ENCODE measurements at regions of chr15 and their contacts with region 1.

Region 1: GRCh38 chr15:71272932-71273331 is 157.7 kb downstream of the THSD4 start:
- DNase-seq: no peak
- H3K4me3 ChIP-seq: no peak overlapping the region
- H3K4me1 ChIP-seq: no peaks in the 10 kb centered on the region
- H3K27me3 ChIP-seq: no peaks in the 10 kb centered on the region

Region 2: GRCh38 chr15:71219645-71220044 is 53.3 kb before region 1 on chr15:
- in situ Hi-C with region 1: loop called (anchors 5 kb)
- DNase-seq: peak; percentile 59
- H3K4me3 ChIP-seq: no peak overlapping the region
- H3K4me1 ChIP-seq: peaks cover 9% of the 10 kb centered on the region
- H3K27me3 ChIP-seq: no peaks in the 10 kb centered on the region

Measured in HAP-1 (cell line).